Endothelial cell of umbilical vein (primary cell): ENCODE measurements at regions of chr6 and their contacts with region 1.

Region 1: GRCh38 chr6:35452186-35453090 is at the start of gene FANCE:
- DNase-seq: peak; percentile 98
- H3K4me3 ChIP-seq: peak within 1 kb of the TSS; percentile 41 to 83 (median 69)
- H3K27ac ChIP-seq: no peak within 1 kb of the TSS
- H3K4me1 ChIP-seq: peaks cover 16% of the 10 kb centered on the region
- H3K27me3 ChIP-seq: peaks cover 0 to 2% of the 10 kb centered on the region in 2 experiments
- CTCF ChIP-seq: no peak
- POLR2A ChIP-seq: no peak
- total RNA-seq, gene FANCE: 11.0 and 12.7 TPM in 2 replicates

Region 2: GRCh38 chr6:35297601-35298481 is 154.6 kb before region 1 on chr6 and contains the start of gene DEF6:
- CTCF ChIA-PET with region 1: interaction called, 61 read pairs
- POLR2A ChIA-PET with region 1: no interaction called
- dilution Hi-C with region 1: no loop called
- intact Hi-C with region 1: loop called (anchors 1 kb)
- DNase-seq: peak; percentile 80
- H3K4me3 ChIP-seq: no peak within 1 kb of the TSS
- H3K27ac ChIP-seq: peak within 1 kb of the TSS; percentile 27
- H3K4me1 ChIP-seq: peaks cover 14% of the 10 kb centered on the region
- H3K27me3 ChIP-seq: no peaks in the 10 kb centered on the region
- CTCF ChIP-seq: peak; percentile 74 to 82
- POLR2A ChIP-seq: no peak
- total RNA-seq, gene DEF6: 0.77 and 1.0 TPM in 2 replicates

Region 3: DNA sequence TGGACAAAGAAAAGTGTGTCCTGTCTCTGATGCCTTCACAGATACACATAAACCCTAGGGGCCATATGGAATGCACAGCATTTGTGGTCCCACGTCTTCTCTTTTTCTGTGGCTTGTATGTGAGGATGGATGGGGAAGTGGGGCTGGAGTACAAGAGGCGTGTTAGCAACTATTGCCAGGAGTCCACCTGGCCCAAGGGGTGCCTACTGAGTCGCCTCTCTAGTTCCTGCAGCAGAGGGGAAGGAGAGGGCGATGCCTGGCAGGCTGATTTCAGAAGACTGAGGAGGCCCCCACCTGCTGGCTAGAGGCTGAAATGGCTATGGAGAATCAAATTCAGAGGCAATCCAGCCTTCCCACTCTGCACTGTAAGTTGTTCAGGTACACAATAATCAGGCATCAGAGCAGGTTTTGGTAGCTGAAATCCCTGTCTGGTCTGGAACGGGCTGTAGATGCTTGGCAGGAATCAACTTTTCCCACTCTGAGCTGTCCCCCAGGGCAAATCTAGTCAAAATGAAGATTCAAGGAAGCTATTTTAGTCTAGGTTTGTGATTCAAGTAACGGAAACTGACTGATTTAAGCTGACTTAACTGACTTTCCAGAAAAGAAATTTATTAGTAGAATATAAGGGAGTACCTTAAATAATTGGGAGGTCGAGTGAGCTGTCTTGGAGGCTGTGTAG is 125.0 kb before region 1 on chr6:
- CTCF ChIA-PET with region 1: interaction called, 15 read pairs
- POLR2A ChIA-PET with region 1: no interaction called
- dilution Hi-C with region 1: no loop called
- intact Hi-C with region 1: no loop called
- DNase-seq: peak; percentile 58
- H3K4me3 ChIP-seq: no peak overlapping the region
- H3K27ac ChIP-seq: no peak overlapping the region
- H3K4me1 ChIP-seq: no peaks in the 10 kb centered on the region
- H3K27me3 ChIP-seq: peaks cover 0 to 5% of the 10 kb centered on the region in 2 experiments
- CTCF ChIP-seq: peak; percentile 53 to 78
- POLR2A ChIP-seq: no peak

Region 4: DNA sequence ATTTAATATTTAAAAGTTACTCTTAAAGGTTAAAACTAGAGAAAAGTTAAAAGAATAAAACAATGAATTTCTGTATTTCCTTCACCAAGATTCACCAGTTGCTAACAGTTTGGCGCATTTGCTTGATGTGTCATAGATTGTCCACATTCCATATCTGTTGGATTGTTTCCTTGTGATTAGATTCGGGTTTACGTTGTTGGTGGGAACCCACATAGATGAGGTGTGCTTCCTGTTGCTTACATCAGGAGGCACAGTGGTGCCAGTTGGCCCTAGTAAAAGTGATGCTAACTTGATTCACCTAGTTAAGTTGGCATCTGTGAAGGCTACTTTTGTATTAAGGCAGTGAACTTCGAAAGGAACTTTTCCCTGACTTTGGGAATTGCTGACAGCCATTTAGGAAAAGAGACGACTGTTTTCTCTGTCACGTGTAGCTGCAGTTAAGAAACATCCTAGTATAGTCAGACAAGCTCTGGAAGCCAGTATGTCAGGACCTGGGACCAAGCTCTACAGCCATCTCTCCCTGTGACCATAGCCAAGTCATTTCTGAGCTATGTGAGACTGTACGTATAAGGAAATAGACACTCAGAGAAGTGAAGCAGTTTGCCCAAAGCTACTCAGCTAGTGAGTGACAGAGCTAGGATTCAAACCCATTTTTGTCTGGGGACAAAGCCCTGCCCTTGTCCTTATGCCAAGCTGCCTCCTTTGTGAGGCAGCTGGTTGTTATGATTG is 61.0 kb before region 1 on chr6:
- CTCF ChIA-PET with region 1: interaction called, 21 read pairs
- POLR2A ChIA-PET with region 1: no interaction called
- dilution Hi-C with region 1: no loop called
- intact Hi-C with region 1: loop called (anchors 1 kb)
- DNase-seq: peak; percentile 88
- H3K4me3 ChIP-seq: no peak overlapping the region
- H3K27ac ChIP-seq: peak overlapping the region; percentile 93
- H3K4me1 ChIP-seq: peaks cover 38% of the 10 kb centered on the region
- H3K27me3 ChIP-seq: no peaks in the 10 kb centered on the region
- CTCF ChIP-seq: no peak
- POLR2A ChIP-seq: peak; percentile 42

Region 5: DNA sequence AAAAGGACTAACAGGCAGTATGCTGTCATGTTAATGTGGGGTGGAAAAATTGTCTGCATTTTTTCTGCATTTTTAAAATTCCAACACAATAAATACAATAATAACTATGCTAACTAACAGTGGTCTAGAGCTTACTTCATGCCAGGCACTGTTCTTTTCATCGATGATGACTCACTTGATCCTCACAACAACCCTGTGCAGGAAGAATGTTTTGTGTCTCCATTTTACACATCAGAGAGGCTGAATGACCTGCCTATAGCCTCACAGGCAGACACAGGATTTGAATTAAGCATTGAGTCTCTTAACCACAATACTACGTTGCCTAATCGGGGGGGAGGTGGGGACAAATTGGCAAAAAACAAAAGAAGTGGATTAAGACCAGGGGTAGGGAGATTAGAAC is 27.2 kb before region 1 on chr6:
- CTCF ChIA-PET with region 1: interaction called, 228 read pairs
- POLR2A ChIA-PET with region 1: no interaction called
- dilution Hi-C with region 1: no loop called
- intact Hi-C with region 1: loop called (anchors 1 kb)
- DNase-seq: peak; percentile 92
- H3K4me3 ChIP-seq: no peak overlapping the region
- H3K27ac ChIP-seq: peak overlapping the region; percentile 98
- H3K4me1 ChIP-seq: peaks cover 48% of the 10 kb centered on the region
- H3K27me3 ChIP-seq: no peaks in the 10 kb centered on the region
- CTCF ChIP-seq: no peak
- POLR2A ChIP-seq: no peak

Region 6: GRCh38 chr6:35468181-35468979 is 15.9 kb after region 1 on chr6 and contains the start of gene RPL10A:
- CTCF ChIA-PET with region 1: interaction called, 14 read pairs
- POLR2A ChIA-PET with region 1: interaction called, 3 read pairs
- dilution Hi-C with region 1: no loop called
- intact Hi-C with region 1: loop called (anchors 1 kb)
- DNase-seq: peak; percentile 97
- H3K4me3 ChIP-seq: peak within 1 kb of the TSS; percentile 69 to 95 (median 92)
- H3K27ac ChIP-seq: peak within 1 kb of the TSS; percentile 76
- H3K4me1 ChIP-seq: peaks cover 26% of the 10 kb centered on the region
- H3K27me3 ChIP-seq: no peaks in the 10 kb centered on the region
- CTCF ChIP-seq: peak; percentile 99 to 100
- POLR2A ChIP-seq: peak; percentile 100
- total RNA-seq, gene RPL10A: 1,327 and 1,339 TPM in 2 replicates